Endothelial cell of umbilical vein (primary cell): ENCODE measurements at regions of chrX and their contacts with region 1.

Region 1: GRCh38 chrX:55717521-55718497 is at the start of gene RRAGB:
- DNase-seq: peak; percentile 93
- H3K4me3 ChIP-seq: peak within 1 kb of the TSS; percentile 82 to 89 (median 89)
- H3K27ac ChIP-seq: peak within 1 kb of the TSS; percentile 95
- H3K4me1 ChIP-seq: peaks cover 28% of the 10 kb centered on the region
- H3K27me3 ChIP-seq: no peaks in the 10 kb centered on the region
- CTCF ChIP-seq: peak; percentile 53 to 58
- POLR2A ChIP-seq: peak; percentile 30
- total RNA-seq, gene RRAGB: 12.3 and 14.3 TPM in 2 replicates

Region 2: DNA sequence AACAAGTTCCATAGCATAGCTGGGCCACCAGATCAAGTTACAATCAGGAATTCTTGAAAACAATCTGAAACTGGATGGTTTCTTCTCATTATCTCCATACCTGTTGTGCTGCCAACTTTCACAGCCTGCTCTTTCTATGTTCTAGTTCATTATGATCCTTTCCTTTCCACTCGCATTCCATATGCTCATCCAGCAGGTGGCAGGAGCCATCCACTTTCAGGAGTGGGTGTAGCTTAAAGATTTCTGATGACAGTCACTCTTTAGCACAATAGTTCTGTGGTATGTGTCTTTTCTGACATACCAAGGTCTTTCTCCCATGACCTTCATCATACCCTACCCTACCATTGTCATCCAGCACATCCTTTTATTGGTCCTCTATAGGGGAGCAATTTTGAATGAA is 582.6 kb before region 1 on chrX:
- CTCF ChIA-PET with region 1: interaction called, 4 read pairs
- POLR2A ChIA-PET with region 1: no interaction called
- dilution Hi-C with region 1: no loop called
- intact Hi-C with region 1: loop called (anchors 5 kb)
- DNase-seq: peak; percentile 59
- H3K4me3 ChIP-seq: no peak overlapping the region
- H3K27ac ChIP-seq: no peak overlapping the region
- H3K4me1 ChIP-seq: no peaks in the 10 kb centered on the region
- H3K27me3 ChIP-seq: no peaks in the 10 kb centered on the region
- CTCF ChIP-seq: peak; percentile 35 to 37
- POLR2A ChIP-seq: no peak

Region 3: GRCh38 chrX:55546956-55547355 is 170.9 kb before region 1 on chrX:
- CTCF ChIA-PET with region 1: interaction called, 5 read pairs
- POLR2A ChIA-PET with region 1: no interaction called
- dilution Hi-C with region 1: no loop called
- intact Hi-C with region 1: loop called (anchors 2 kb)
- DNase-seq: peak; percentile 50
- H3K4me3 ChIP-seq: no peak overlapping the region
- H3K27ac ChIP-seq: peak overlapping the region; percentile 55
- H3K4me1 ChIP-seq: peaks cover 21% of the 10 kb centered on the region
- H3K27me3 ChIP-seq: no peaks in the 10 kb centered on the region
- CTCF ChIP-seq: no peak
- POLR2A ChIP-seq: no peak

Region 4: DNA sequence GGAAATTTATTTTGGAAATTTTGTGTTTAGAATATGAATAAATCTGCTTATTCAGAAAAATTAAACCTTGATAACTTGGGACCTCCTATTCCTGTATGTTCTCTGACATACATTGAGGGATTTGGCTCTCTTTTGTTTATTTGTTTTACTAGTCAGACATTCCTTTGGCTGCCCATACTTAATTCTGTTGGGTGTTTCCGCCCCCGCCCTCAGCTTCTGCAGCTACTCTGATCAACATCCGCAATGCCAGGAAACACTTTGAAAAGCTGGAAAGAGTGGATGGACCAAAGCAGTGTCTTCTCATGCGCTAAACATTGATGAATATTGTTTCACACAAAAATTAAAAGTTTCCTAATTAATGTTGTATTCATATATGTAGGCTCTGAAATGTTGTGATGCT is 40.2 kb after region 1 on chrX:
- CTCF ChIA-PET with region 1: interaction called, 5 read pairs
- POLR2A ChIA-PET with region 1: no interaction called
- dilution Hi-C with region 1: no loop called
- intact Hi-C with region 1: loop called (anchors 2 kb)
- DNase-seq: peak; percentile 76
- H3K4me3 ChIP-seq: no peak overlapping the region
- H3K27ac ChIP-seq: peak overlapping the region; percentile 53
- H3K4me1 ChIP-seq: peaks cover 23% of the 10 kb centered on the region
- H3K27me3 ChIP-seq: no peaks in the 10 kb centered on the region
- CTCF ChIP-seq: no peak
- POLR2A ChIP-seq: no peak

Region 5: GRCh38 chrX:55778321-55778720 is 60.5 kb after region 1 on chrX:
- CTCF ChIA-PET with region 1: no interaction called
- POLR2A ChIA-PET with region 1: no interaction called
- dilution Hi-C with region 1: no loop called
- intact Hi-C with region 1: no loop called
- DNase-seq: no peak
- H3K4me3 ChIP-seq: no peak overlapping the region
- H3K27ac ChIP-seq: no peak overlapping the region
- H3K4me1 ChIP-seq: no peaks in the 10 kb centered on the region
- H3K27me3 ChIP-seq: no peaks in the 10 kb centered on the region
- CTCF ChIP-seq: no peak
- POLR2A ChIP-seq: no peak

Region 6: DNA sequence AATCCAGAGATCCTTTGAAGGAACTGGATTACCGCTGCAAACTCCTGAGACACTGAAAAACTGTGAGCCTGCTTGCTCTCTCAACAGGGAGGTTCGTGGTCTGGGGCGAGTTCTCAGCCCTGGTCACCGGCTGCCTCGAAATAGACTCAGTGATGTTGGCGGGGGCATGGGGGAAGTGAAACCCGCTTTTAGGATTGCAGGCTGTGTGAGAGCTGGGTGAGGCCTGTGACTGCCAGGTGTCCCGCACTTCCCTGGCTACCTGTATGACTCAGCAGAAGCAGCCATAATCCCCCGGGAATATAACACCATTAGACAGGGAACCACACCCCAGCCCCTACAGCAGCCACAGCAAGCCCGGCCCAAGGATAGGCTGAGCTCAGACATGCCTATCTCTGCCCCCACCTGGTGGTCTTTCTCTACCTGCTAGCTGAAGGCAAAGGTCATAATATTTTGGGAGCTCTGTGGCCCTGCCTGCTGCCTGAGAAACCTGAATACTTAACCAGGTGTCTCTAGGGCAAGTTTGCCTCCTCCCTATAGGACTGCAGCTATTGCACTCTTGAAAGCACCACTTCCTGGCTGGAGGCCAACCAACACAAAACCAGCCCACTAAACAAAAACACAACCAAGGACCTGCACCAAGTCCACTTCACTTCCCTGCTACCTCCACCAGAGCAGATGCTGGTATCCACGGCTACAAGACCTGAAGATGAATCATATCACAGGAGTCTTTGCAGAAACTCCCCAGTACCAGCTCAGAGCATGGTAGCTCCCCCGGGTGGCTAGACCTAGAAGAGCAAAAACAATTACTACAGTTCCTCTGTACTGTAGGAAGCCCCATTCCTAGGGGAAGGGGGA is 201.8 kb after region 1 on chrX:
- CTCF ChIA-PET with region 1: no interaction called
- POLR2A ChIA-PET with region 1: no interaction called
- dilution Hi-C with region 1: no loop called
- intact Hi-C with region 1: no loop called
- DNase-seq: no peak
- H3K4me3 ChIP-seq: no peak overlapping the region
- H3K27ac ChIP-seq: no peak overlapping the region
- H3K4me1 ChIP-seq: no peaks in the 10 kb centered on the region
- H3K27me3 ChIP-seq: no peaks in the 10 kb centered on the region
- CTCF ChIP-seq: no peak
- POLR2A ChIP-seq: no peak

Region 7: DNA sequence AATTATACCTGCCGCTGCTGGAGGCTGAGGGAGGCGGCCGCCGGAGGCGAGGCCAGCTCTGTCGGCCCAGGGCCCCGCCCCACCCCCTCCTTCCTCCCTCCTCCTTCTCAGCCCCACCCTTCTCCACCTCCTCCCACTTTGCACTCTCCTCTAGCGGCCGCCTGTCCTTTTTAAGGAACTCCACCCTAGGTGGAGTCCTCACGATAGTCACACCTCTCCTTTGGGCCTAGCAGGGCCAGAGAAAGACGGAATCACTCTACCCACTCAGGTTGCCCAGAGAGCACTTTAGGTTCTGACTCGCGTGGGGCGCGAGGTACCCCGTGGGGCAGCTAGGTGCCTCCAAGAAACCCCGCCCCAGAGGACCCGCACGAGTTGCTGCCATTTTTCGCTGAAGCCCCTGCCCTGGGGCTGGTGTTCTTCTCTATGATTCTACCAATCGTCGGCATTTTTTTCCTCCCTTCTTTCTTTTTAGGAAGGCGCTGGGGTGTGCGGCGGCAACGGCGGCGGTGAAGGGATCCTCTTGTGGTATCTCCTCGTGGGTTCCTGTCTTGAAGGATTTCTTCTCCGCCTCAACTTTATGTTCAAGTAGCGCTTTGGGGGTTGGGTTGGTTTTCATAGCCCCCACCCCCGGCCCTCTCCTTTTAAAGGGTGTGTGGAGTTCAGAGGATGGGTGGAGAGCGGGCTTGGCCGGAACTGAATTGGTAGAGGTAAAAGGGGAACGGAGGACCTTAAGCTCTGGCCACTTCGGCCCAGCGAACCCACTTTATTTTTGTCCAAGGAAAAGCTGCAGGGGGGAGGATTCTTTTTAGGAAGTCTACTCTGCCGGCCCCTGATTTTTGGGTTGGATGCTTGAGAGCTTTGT is 514.6 kb after region 1 on chrX and contains the start of gene KLF8:
- CTCF ChIA-PET with region 1: no interaction called
- POLR2A ChIA-PET with region 1: no interaction called
- dilution Hi-C with region 1: no loop called
- intact Hi-C with region 1: loop called (anchors 5 kb)
- DNase-seq: no peak
- H3K4me3 ChIP-seq: peak within 1 kb of the TSS; percentile 28 to 68 (median 51)
- H3K27ac ChIP-seq: no peak within 1 kb of the TSS
- H3K4me1 ChIP-seq: peaks cover 9% of the 10 kb centered on the region
- H3K27me3 ChIP-seq: peaks cover 4 to 6% of the 10 kb centered on the region in 2 experiments
- CTCF ChIP-seq: no peak
- POLR2A ChIP-seq: no peak
- total RNA-seq, gene KLF8: 1.0 and 1.2 TPM in 2 replicates